PC-3 (cell line): ENCODE measurements at regions of chr6 and their contacts with region 1.

Region 1: DNA sequence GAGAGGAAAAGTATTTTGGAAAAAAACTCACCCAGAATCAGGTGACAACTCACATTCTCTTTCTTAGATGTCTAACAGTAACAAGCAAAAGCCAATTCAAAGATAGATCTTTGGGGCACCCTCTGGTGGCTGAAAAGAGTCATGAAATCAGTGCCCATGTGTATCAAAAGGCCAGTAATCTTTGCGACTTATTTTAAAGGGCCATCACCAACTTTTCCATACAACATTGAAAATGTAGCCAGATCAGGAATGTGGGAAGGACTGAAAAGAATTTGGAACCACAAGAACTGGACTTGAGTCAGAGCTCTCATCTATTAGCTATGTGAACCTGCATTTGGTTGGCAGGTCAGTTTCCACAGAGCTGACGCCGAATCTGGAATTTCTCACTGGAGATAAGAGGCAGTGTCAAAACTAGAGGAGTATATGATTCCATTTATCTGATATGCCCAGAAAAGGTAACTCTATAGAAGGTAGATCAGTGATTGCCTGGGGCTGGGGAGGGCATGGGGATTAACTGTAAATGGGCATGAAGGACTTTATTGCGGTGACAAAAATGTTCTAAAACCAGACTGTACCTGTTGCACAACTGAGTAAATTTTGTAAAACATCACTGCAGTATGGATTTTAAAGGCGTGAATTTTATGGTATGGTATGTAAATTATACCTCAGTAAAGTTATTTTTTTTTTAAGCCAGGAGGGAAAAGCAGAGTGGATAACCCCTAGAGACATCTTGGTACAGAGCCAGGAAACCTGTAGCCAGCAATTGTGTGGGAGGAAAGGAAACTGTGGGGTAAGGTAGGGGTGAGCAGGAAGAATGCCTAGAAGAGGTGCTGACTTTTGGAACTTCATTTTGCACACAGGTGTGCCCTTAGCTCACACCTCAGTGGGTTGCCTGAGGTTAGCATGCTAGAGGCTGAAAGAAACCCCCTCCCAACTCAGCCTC is 117.1 kb upstream of the ASF1A start:
- DNase-seq: peak; percentile 87
- ATAC-seq: peak; percentile 81
- H3K4me3 ChIP-seq: peak overlapping the region; percentile 40; the same call in 1 of the 2 replicates
- H3K27ac ChIP-seq: peak overlapping the region; percentile 41
- H3K4me1 ChIP-seq: peaks cover 26% of the 10 kb centered on the region
- H3K27me3 ChIP-seq: no peaks in the 10 kb centered on the region
- CTCF ChIP-seq: peak; percentile 77

Region 2: DNA sequence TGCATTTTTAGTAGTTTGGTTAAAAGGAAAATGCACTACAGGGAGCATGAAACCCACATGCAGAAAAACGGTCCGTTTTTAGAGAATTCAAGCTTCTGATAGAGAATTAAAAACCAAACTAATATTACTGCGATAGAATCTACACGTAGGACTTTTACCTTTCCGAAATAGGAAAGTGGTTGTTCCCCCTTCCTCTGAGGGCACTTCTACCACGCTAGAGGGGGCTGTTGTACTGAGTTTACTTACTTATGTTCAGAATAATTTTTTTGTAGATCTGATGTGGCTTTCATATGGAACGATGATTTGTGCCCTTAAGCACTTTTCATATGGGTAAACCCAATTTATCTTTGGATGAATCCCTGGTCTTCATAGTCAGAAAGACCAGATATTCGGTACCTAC is 493.1 kb before region 1 on chr6:
- CTCF ChIA-PET with region 1: no interaction called
- POLR2A ChIA-PET with region 1: no interaction called
- intact Hi-C with region 1: loop called (anchors 5 kb)
- DNase-seq: peak; percentile 71
- ATAC-seq: peak; percentile 77
- H3K4me3 ChIP-seq: no peak overlapping the region
- H3K27ac ChIP-seq: no peak overlapping the region
- H3K4me1 ChIP-seq: no peaks in the 10 kb centered on the region
- H3K27me3 ChIP-seq: no peaks in the 10 kb centered on the region
- CTCF ChIP-seq: peak; percentile 84

Region 3: GRCh38 chr6:118565311-118565960 is 211.4 kb before region 1 on chr6:
- CTCF ChIA-PET with region 1: interaction called, 4 read pairs
- POLR2A ChIA-PET with region 1: no interaction called
- intact Hi-C with region 1: loop called (anchors 1 kb)
- DNase-seq: peak; percentile 56
- ATAC-seq: peak; percentile 63
- H3K4me3 ChIP-seq: no peak overlapping the region
- H3K27ac ChIP-seq: no peak overlapping the region
- H3K4me1 ChIP-seq: no peaks in the 10 kb centered on the region
- H3K27me3 ChIP-seq: no peaks in the 10 kb centered on the region
- CTCF ChIP-seq: peak; percentile 64

Region 4: DNA sequence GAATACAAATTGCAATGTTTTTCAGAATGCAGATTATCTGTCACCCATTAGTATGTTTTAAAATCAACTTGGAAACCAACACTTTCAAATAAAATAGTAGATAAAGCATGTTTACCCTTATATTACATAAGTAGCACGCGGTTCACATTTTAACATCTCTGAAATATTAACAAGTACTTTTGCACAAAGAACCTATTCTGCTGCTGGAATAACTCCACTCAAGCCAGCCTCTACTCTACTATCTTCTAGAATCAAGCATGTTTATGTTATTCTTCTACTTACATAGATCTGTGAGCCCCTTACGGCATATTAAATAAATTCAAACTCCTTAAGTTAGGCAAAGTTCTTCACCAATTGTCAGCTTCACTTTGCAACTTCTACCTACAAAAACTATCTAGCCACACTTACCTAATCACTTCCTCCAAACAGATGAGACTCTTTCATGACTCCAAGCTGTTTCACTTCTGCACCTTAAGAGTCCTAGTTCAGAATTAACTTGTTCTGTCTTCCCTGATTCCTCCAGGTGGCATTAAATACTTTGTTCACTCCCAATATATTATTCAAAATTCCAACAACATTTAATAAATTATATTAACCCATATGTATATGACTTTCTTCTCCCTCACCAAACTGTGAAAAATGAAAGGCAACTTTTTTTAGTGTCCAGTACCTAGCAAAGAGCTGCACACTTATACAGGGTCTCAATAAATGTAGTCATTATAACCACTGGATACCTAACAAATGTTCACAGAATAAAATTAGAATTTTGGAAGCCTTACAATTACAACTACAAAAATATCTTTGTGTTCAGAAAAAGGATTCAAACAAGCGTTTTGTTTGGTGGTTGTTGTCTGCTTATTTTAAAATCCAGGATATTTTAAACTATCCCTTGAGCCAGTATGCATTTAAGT is 137.6 kb before region 1 on chr6:
- CTCF ChIA-PET with region 1: no interaction called
- POLR2A ChIA-PET with region 1: no interaction called
- intact Hi-C with region 1: loop called (anchors 1 kb)
- DNase-seq: no peak
- ATAC-seq: no peak
- H3K4me3 ChIP-seq: no peak overlapping the region
- H3K27ac ChIP-seq: no peak overlapping the region
- H3K4me1 ChIP-seq: no peaks in the 10 kb centered on the region
- H3K27me3 ChIP-seq: no peaks in the 10 kb centered on the region
- CTCF ChIP-seq: no peak

Region 5: DNA sequence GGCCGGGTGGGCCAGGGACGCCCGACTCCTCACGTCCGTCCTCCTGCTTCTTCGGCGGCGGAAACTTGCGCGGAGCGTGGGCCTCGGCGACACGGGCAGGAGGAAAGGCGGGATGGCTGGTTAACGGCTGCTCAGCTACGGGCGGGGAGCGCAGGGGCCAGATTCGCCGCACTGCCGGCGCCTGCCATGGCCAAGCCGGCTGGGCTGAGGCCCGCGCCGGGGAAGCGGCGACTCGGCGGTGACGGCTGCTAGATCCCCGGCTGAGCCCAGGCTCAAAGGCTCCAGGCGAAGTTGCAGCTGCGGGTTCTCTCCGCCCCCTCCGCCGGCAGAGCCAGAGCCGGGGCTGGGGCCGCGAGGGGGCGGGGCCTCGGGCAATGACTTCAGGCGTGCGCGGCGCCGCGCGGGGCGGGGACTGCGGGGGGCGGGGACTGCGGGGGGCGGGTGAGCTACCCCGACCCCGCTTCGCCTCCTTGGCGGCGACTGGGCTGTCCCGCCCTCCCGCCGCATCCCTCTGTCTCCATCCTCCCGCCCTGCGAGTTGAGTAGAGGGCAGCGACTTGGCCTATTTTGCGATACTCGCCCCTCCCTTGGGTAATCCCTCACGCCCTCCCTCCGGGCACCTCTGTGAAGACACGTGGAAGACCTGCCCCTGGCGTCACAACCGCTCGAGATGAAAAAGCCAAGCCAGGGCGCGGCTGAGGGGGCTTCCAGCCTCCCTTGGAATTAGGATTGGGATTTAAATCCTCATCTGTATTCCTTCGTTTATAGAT is 125.4 kb before region 1 on chr6 and contains the start of gene CEP85L:
- CTCF ChIA-PET with region 1: no interaction called
- POLR2A ChIA-PET with region 1: no interaction called
- intact Hi-C with region 1: loop called (anchors 5 kb)
- DNase-seq: peak; percentile 82
- ATAC-seq: peak; percentile 92
- H3K4me3 ChIP-seq: peak within 1 kb of the TSS; percentile 78
- H3K27ac ChIP-seq: peak within 1 kb of the TSS; percentile 48; the same call in 1 of the 2 replicates
- H3K4me1 ChIP-seq: peaks cover 8% of the 10 kb centered on the region; the same call in 1 of the 2 replicates
- H3K27me3 ChIP-seq: no peaks in the 10 kb centered on the region
- CTCF ChIP-seq: no peak
- total RNA-seq, gene CEP85L: 3.9 and 7.8 TPM in 2 replicates

Region 6: DNA sequence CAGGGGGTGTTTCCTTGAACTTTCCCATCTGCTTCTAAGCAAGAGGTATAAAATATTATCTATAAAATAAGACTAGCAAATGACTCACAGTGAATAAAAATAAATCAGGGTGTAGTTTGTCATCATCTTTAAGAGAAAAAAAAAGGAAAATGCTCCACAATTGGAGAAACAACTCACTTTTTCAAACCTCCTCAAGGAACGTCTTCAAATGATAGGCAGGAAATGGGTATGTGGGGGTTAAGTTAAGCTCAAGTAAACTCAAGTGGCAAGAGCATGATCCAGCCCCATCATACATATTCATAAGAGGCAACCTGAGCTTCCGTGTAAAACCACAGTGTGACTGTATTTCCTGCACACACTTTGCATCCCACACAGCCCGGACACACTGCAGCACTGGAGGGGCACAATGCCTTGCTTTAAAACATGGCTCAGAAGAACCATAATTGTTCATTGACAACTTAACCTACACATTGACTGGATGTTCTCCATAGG is 67.0 kb before region 1 on chr6:
- CTCF ChIA-PET with region 1: no interaction called
- POLR2A ChIA-PET with region 1: no interaction called
- intact Hi-C with region 1: loop called (anchors 1 kb)
- DNase-seq: peak; percentile 75
- ATAC-seq: peak; percentile 64
- H3K4me3 ChIP-seq: peak overlapping the region; percentile 66
- H3K27ac ChIP-seq: peak overlapping the region; percentile 99
- H3K4me1 ChIP-seq: peaks cover 49% of the 10 kb centered on the region
- H3K27me3 ChIP-seq: no peaks in the 10 kb centered on the region
- CTCF ChIP-seq: no peak

Region 7: DNA sequence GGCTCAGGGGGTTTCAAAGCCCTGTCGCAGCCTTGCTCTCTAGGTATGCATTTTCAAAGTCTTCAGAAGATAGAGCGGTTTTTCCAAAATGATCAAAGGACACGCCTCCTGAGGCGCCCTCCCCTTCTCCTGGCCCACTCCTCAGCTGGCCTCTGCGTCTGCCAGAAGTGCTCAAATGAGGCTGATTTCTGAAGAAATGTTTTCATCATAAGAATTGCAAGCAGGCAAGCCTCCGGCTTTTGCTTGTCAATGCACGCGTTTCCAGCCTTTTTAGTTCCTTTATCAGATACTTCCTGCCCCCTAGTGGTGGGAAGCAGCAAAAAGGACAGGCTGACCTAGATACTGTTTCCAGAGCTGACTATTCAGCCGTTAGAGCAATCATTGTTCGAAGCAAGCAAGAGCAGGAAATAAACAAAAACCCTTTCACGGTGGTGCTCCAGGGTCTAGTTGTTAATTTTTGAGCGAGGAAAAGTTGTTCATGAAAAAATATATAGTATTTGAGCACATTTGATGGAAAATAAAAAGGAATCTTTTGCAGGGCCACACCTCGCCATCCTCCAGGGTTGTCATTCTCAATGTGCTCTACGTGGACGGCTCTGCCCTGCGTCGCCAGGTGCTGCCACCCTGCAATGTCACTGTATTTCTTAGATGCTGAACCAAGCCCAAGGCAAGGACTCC is 23.7 kb after region 1 on chr6:
- CTCF ChIA-PET with region 1: no interaction called
- POLR2A ChIA-PET with region 1: no interaction called
- intact Hi-C with region 1: loop called (anchors 1 kb)
- DNase-seq: peak; percentile 90
- ATAC-seq: peak; percentile 92
- H3K4me3 ChIP-seq: peak overlapping the region; percentile 25; the same call in 1 of the 2 replicates
- H3K27ac ChIP-seq: no peak overlapping the region
- H3K4me1 ChIP-seq: no peaks in the 10 kb centered on the region; the same call in 1 of the 2 replicates
- H3K27me3 ChIP-seq: no peaks in the 10 kb centered on the region
- CTCF ChIP-seq: peak; percentile 88